Heart left ventricle (tissue), 16 donors: ENCODE measurements at regions of chr6 and their contacts with region 1.

Region 1: DNA sequence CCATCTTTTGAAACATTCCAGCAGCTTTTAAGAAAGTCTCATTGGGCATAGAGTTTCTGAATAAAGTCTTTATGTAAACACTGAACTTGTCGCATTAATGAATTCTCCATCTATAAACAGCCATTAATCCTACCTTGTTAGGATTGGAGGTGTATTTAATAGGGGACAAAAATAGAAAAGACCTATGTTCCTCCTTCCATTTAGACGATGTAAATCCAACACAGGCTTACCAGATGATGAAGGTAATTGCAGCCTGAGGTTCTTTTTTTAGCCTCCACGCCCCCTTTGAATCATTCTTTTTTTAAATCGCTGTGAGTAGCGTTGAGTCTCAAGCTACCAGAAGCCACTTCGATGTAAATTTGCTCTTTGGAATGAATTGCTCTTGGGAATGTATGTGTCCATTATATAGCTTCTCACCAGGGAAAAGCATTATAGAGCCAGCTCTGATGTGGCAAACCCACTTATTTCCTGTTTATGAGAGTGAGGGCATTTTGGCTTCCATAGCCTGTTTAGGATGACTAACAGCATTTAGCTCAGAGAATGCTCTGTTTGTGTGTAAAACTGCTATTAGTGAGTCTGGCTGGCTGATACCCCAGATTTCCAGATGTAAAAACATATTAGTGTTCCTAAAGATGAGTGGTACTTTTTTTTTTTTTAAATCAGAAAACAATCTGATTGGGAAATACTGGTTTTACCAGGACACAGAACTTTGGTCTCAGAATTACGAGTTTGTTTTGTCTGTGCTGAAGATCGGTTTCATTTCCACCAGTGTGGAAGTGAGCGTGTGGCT is 74.9 kb upstream of the CLDN20 start:
- DNase-seq: no peak
- ATAC-seq: peak in 1 of 4 donors; percentile 79
- H3K4me3 ChIP-seq: peak overlapping the region in 2 of 12 donors; percentile 14 to 17
- H3K27ac ChIP-seq: peak overlapping the region in 8 of 12 donors; percentile 11 to 79 (median 52)
- H3K4me1 ChIP-seq: peaks cover 0 to 39% (median 13%) of the 10 kb centered on the region in 12 donors
- H3K27me3 ChIP-seq: no peaks in the 10 kb centered on the region
- CTCF ChIP-seq: no peak
- POLR2A ChIP-seq: no peak

Region 2: DNA sequence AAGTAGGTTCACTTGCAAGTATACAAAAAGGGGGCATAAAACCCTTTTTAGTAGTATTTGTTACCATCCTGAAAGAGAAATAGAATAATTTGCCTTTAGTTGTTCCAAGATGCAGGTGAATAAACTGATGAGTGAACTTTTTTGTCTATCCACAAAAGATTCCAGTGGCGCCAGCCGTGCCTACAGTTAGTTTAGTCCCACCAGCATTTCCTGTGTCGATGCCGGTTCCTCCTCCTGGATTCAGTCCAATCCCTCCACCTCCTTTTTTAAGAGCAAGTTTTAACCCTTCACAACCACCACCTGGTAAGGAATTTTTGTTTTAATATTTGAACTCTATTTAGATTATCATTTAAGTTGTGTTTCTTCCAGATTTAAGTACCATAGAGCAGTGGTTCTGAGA is 364.8 kb before region 1 on chr6:
- intact Hi-C with region 1: no loop called
- DNase-seq: no peak
- ATAC-seq: peak in 1 of 4 donors; percentile 37
- H3K4me3 ChIP-seq: no peak overlapping the region
- H3K27ac ChIP-seq: peak overlapping the region in 3 of 12 donors; percentile 39 to 53 (median 46)
- H3K4me1 ChIP-seq: peaks cover 0 to 27% (median 12%) of the 10 kb centered on the region in 12 donors
- H3K27me3 ChIP-seq: no peaks in the 10 kb centered on the region
- CTCF ChIP-seq: no peak
- POLR2A ChIP-seq: no peak

Region 3: GRCh38 chr6:155314092-155314772 is 125.3 kb after region 1 on chr6 and contains the start of gene TFB1M:
- intact Hi-C with region 1: loop called in 1 of 10 experiments (anchors 10 kb)
- DNase-seq: peak; percentile 98 to 99 (median 99)
- ATAC-seq: peak; percentile 99
- H3K4me3 ChIP-seq: peak within 1 kb of the TSS; percentile 38 to 91 (median 78)
- H3K27ac ChIP-seq: peak within 1 kb of the TSS; percentile 45 to 95 (median 85)
- H3K4me1 ChIP-seq: peaks cover 0 to 25% (median 6%) of the 10 kb centered on the region in 12 donors
- H3K27me3 ChIP-seq: no peaks in the 10 kb centered on the region
- CTCF ChIP-seq: peak in 1 of 12 donors; percentile 4
- POLR2A ChIP-seq: peak in 1 of 2 donors; percentile 90
- total RNA-seq, gene TFB1M: 11.4 to 24.5 (median 20.2) TPM